ENCODE measurements at regions of chr20 and their contacts with region 1.

Region 1: GRCh38 chr20:17995967-17996819 is 27.4 kb downstream of the MGME1 start:
- DNase-seq: peak in 11 of 14 experiments; percentile 8 to 80 (median 22)
- ATAC-seq: peak; percentile 97
- H3K4me3 ChIP-seq: no peak overlapping the region
- H3K4me3 Mint-ChIP-seq: no peak overlapping the region
- H3K27ac ChIP-seq: no peak overlapping the region
- H3K27ac Mint-ChIP-seq: no peak overlapping the region
- H3K4me1 ChIP-seq: peaks cover 7% of the 10 kb centered on the region
- H3K4me1 Mint-ChIP-seq: peaks cover 22% of the 10 kb centered on the region
- H3K27me3 ChIP-seq: peaks cover 0 to 2% of the 10 kb centered on the region in 2 experiments
- H3K27me3 Mint-ChIP-seq: no peaks in the 10 kb centered on the region
- CTCF ChIP-seq: peak; percentile 88

Region 2: GRCh38 chr20:17442588-17442987 is 553.6 kb before region 1 on chr20:
- CTCF ChIA-PET with region 1: no interaction called
- POLR2A ChIA-PET with region 1: no interaction called
- intact Hi-C with region 1: no loop called
- DNase-seq: no peak
- ATAC-seq: no peak
- H3K4me3 ChIP-seq: no peak overlapping the region
- H3K4me3 Mint-ChIP-seq: no peak overlapping the region
- H3K27ac ChIP-seq: no peak overlapping the region
- H3K27ac Mint-ChIP-seq: no peak overlapping the region
- H3K4me1 ChIP-seq: no peaks in the 10 kb centered on the region
- H3K4me1 Mint-ChIP-seq: no peaks in the 10 kb centered on the region
- H3K27me3 ChIP-seq: peaks cover 6 to 14% of the 10 kb centered on the region in 2 experiments
- H3K27me3 Mint-ChIP-seq: peaks cover 51% of the 10 kb centered on the region
- CTCF ChIP-seq: no peak

Region 3: DNA sequence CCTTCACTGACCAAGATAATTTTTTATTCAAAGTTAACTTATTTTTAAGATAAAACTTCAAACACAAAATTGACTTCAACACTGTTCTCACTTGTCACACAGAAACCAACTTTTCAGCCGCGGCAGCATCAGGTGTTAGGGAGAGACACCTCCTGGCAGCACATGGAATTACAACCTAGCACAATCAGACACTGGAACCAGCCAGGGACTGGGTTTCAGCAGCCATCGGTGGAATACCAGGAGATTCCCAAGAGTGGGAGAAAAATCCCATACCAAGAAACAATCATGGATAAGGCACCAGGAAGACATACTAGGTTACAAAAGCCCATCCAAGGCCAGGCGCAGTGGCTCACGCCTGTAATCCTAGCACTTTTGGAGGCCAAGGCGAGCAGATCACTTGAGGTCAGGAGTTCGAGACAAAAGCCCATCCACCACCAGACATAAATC is 97.6 kb before region 1 on chr20:
- CTCF ChIA-PET with region 1: no interaction called
- POLR2A ChIA-PET with region 1: no interaction called
- intact Hi-C with region 1: loop called in 1 of 2 experiments (anchors 1 kb)
- DNase-seq: peak; percentile 39 to 80 (median 54)
- ATAC-seq: peak; percentile 89
- H3K4me3 ChIP-seq: no peak overlapping the region
- H3K4me3 Mint-ChIP-seq: no peak overlapping the region
- H3K27ac ChIP-seq: no peak overlapping the region
- H3K27ac Mint-ChIP-seq: no peak overlapping the region
- H3K4me1 ChIP-seq: peaks cover 10% of the 10 kb centered on the region
- H3K4me1 Mint-ChIP-seq: peaks cover 11% of the 10 kb centered on the region
- H3K27me3 ChIP-seq: peaks cover 0 to 10% of the 10 kb centered on the region in 2 experiments
- H3K27me3 Mint-ChIP-seq: peaks cover 27% of the 10 kb centered on the region
- CTCF ChIP-seq: peak; percentile 95

Region 4: DNA sequence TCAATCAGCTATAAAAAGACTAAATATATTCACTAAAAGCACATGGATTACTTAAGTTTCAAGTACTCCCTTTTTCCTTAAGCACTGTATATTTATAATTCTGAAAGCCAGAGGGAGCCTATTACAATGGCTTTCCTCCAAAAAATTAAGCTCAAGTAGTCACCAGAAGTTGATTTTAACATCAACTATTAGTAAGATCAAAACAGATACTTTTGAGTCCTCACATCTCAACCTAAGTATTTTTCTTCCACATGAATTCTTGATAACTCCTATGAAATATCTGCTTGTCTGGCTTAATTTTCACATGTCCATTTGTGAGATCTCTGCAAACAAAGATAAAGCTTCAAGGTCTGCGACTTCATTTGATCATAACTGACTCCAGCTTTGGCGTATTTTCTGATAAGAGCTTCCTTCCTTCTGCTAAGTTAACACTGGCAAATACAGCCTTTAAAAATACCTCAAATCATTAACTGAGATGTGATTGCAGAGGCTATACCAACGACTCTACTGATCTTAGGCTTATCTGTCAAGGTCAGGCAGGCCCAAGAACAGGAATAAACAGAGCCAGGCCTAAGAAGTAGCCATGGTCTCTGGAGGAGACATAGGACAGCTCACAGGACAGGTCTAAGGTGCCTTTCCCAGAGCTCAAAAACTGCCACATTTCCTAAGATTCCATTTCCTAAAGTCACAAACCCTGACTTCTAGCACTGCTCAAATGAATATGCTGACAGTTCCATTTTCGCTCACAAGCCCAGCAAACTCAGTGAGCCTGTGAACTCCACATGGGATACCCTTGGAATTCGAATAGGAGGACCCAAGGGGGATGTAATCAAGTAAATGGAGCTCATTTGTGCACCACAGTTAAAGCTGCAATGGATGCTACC is 37.6 kb before region 1 on chr20:
- CTCF ChIA-PET with region 1: interaction called, 9 read pairs
- POLR2A ChIA-PET with region 1: interaction called, 3 read pairs
- intact Hi-C with region 1: loop called (anchors 2 to 5 kb)
- DNase-seq: no peak
- ATAC-seq: no peak
- H3K4me3 ChIP-seq: no peak overlapping the region
- H3K4me3 Mint-ChIP-seq: peak overlapping the region; percentile 16
- H3K27ac ChIP-seq: peak overlapping the region in 1 of 2 donors; percentile 63
- H3K27ac Mint-ChIP-seq: peak overlapping the region; percentile 60
- H3K4me1 ChIP-seq: peaks cover 61% of the 10 kb centered on the region
- H3K4me1 Mint-ChIP-seq: peaks cover 75% of the 10 kb centered on the region
- H3K27me3 ChIP-seq: no peaks in the 10 kb centered on the region
- H3K27me3 Mint-ChIP-seq: no peaks in the 10 kb centered on the region
- CTCF ChIP-seq: no peak

Measured in CD4-positive, alpha-beta T cell (primary cell).